GM10248 (cell line): ENCODE measurements at regions of chr1 and their contacts with region 1.

Region 1: GRCh38 chr1:37434292-37434907 is 40.0 kb upstream of the ZC3H12A start:
- DNase-seq: peak; percentile 87
- CTCF ChIP-seq: peak; percentile 99

Region 2: DNA sequence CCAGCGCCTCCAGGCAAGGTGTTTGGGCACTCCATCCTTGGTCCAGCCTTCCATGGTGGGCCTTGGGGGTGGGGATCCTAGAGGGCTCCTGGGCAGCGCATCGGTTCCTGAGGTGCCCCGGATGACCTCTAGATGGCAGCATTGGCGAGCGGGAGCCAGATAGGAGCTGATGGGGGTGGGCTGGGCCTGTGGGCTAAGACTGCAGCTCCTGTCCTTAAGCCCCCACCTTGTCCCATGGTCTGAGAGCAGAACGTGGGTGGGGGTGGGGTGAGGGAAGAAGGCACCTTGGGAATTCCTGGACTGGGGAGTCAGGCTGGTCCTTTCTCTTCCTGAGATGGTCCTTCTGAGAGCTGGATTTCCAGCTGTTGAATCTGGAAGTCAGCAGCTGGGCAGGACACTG is 858.3 kb before region 1 on chr1:
- CTCF ChIA-PET with region 1: interaction called, 19 read pairs
- POLR2A ChIA-PET with region 1: no interaction called
- DNase-seq: peak; percentile 79
- CTCF ChIP-seq: peak; percentile 82

Region 3: GRCh38 chr1:36609241-36610027 is 825.0 kb before region 1 on chr1:
- CTCF ChIA-PET with region 1: interaction called, 12 read pairs
- POLR2A ChIA-PET with region 1: no interaction called
- DNase-seq: peak; percentile 76
- CTCF ChIP-seq: peak; percentile 76

Region 4: GRCh38 chr1:36966242-36966641 is 468.2 kb before region 1 on chr1:
- CTCF ChIA-PET with region 1: no interaction called
- POLR2A ChIA-PET with region 1: no interaction called
- DNase-seq: no peak
- CTCF ChIP-seq: no peak

Region 5: GRCh38 chr1:37415611-37416244 is 18.7 kb before region 1 on chr1:
- CTCF ChIA-PET with region 1: interaction called, 13 read pairs
- POLR2A ChIA-PET with region 1: no interaction called
- DNase-seq: no peak
- CTCF ChIP-seq: no peak

Region 6: GRCh38 chr1:37449936-37450335 is 15.5 kb after region 1 on chr1:
- CTCF ChIA-PET with region 1: interaction called, 18 read pairs
- POLR2A ChIA-PET with region 1: no interaction called
- DNase-seq: no peak
- CTCF ChIP-seq: no peak